ENCODE measurements at regions of chr19 and their contacts with region 1.

Region 1: DNA sequence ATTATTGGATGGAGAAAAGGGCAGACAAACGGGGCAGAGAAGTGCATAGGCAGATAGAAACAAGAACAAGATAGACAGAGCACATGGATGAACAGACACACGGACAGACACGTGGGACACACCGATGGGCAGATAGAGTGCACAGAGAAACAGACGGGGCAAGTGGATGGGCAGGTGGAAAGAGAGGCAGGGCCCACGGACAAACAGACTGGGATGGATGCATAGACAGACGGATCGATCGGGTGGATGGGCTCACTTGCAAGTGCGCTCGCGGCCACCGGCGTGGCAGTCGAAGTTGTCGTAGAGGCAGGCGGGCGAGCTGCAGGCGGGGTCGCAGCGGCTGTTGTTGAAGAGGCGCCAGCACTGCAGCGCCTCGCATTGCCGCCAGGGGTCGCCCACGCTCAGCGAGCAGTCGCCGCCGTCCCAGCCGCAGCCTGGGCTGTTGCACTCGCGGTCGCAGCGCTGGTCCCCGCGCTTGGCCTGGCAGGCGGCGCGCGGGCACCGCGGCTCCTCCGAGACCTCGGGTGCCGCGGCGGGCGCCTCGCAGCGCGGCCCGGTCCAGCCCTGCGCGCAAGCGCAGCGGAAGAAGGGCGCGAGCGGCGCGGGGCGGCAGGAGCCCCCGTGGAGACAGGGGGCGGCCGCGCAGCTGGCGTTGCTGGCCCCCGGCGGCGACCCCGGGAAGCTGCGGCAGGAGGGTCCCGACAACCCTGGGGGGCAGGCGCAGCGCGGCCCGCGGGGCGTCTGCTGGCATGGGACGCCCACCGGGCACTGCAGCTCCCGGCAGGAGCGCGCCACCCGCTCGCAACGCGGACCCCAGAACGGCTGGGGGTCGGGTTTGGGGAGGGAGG is 23.3 kb downstream of the NOTCH3 start:
- DNase-seq: no peak
- H3K4me3 ChIP-seq: peak overlapping the region; percentile 41 to 50 (median 43)
- H3K27ac ChIP-seq: no peak overlapping the region
- H3K4me1 ChIP-seq: peaks cover 5 to 12% (median 10%) of the 10 kb centered on the region in 4 donors
- H3K27me3 ChIP-seq: peaks cover 0 to 32% (median 4%) of the 10 kb centered on the region in 4 donors
- CTCF ChIP-seq: peak; percentile 96 to 98 (median 96)
- EP300 ChIP-seq: no peak
- POLR2A ChIP-seq: no peak

Region 2: DNA sequence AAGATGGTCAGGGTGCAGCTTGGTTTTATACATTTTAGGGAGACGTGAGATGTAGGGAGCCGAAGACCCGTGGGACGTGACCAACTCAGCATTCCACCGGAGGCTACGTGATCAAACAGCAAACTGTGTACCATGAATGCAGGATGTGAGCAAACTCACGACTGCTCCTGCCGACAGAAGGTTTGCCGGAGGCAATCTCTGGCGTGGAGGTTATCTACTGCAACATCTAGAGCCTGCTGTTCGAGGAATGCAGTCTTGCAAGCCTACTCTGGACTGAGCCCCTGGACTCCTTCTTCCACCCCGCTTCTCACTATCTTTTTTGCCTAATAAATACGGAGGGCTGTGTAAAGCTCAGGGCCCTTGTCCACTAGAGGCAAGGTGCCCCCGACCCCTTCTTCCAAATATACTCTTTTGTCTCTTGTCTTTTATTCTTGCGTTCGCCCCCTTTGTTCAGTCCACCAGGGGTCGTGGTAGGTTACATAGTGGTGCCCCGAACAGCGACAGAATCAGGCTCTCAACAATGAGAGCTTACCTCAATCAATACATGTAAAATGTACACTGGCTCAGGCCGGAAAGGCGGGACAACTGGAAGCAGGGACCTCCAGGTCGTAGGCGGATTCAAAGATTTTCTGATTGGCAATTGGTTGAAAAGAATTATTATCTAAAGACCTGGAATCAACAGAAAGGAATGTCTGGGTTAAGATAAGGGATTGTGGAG is 104.4 kb before region 1 on chr19:
- intact Hi-C with region 1: no loop called
- DNase-seq: no peak
- H3K4me3 ChIP-seq: no peak overlapping the region
- H3K27ac ChIP-seq: no peak overlapping the region
- H3K4me1 ChIP-seq: no peaks in the 10 kb centered on the region
- H3K27me3 ChIP-seq: peaks cover 0 to 15% (median 0%) of the 10 kb centered on the region in 4 donors
- CTCF ChIP-seq: no peak
- EP300 ChIP-seq: no peak
- POLR2A ChIP-seq: no peak

Region 3: GRCh38 chr19:15251749-15252397 is 74.4 kb after region 1 on chr19:
- intact Hi-C with region 1: loop called (anchors 5 kb)
- DNase-seq: peak; percentile 93
- H3K4me3 ChIP-seq: peak overlapping the region in 3 of 4 donors; percentile 22 to 41 (median 28)
- H3K27ac ChIP-seq: peak overlapping the region; percentile 77 to 90 (median 86)
- H3K4me1 ChIP-seq: peaks cover 74 to 77% (median 76%) of the 10 kb centered on the region in 4 donors
- H3K27me3 ChIP-seq: no peaks in the 10 kb centered on the region
- CTCF ChIP-seq: peak in 2 of 3 experiments; percentile 28 to 53
- EP300 ChIP-seq: no peak
- POLR2A ChIP-seq: no peak

Region 4: DNA sequence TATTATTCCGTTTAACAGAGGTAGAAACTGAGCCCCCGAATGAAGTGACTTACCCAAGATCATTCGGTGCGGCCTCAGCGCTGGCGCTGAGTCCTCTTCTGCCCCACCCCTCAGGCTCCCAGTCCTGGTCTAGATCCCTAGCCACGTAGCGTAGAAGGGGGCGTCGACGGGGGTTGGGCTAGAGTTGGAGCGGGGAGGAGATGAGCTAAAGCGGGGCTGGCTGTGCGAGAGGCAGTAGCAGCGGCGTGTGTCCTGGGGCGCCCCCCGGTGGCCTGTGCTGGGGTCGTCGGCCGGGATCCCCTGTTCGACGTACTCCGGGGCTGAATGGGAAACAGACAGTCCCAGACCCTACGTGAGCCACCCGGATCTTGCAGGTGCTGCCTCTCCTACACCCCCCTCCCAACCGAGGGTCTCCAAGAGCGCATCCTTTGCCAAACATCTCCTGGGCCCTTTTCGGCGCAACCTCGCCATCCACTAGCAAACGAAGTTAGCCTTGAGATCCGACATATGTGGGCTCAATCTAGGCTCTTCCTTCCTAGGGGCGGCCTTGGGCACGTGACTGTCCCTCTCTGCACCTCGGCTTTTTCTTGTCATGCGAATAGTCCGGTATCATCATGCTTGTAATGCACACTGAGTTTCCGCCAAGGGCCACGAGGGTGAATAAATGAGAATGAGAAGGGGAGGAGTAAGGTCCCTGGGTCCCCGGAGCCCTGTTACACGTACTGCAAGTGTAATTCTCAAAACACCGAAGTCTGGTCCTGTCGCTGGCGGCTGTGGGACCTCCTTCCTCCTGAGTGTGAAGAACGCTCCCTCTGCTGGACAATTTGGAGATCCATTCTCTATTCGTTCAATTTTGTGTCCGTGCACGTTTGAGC is 378.5 kb after region 1 on chr19:
- intact Hi-C with region 1: loop called (anchors 1 kb)
- DNase-seq: peak; percentile 97
- H3K4me3 ChIP-seq: peak overlapping the region; percentile 25 to 48 (median 38)
- H3K27ac ChIP-seq: no peak overlapping the region
- H3K4me1 ChIP-seq: peaks cover 10 to 25% (median 22%) of the 10 kb centered on the region in 4 donors
- H3K27me3 ChIP-seq: peaks cover 0 to 73% (median 6%) of the 10 kb centered on the region in 4 donors
- CTCF ChIP-seq: peak; percentile 73 to 80 (median 77)
- EP300 ChIP-seq: no peak
- POLR2A ChIP-seq: no peak